Mammary epithelial cell (primary cell): ENCODE measurements at regions of chr22 and their contacts with region 1.

Region 1: GRCh38 chr22:46649141-46650077 is 29.2 kb downstream of the GRAMD4 start:
- DNase-seq: no peak
- H3K4me3 ChIP-seq: no peak overlapping the region
- H3K27ac ChIP-seq: no peak overlapping the region
- H3K4me1 ChIP-seq: no peaks in the 10 kb centered on the region
- H3K27me3 ChIP-seq: no peaks in the 10 kb centered on the region
- CTCF ChIP-seq: no peak

Region 2: GRCh38 chr22:46549971-46550641 is 99.3 kb before region 1 on chr22:
- CTCF ChIA-PET with region 1: no interaction called
- dilution Hi-C with region 1: loop called (anchors 5 kb)
- in situ Hi-C with region 1: no loop called
- intact Hi-C with region 1: no loop called
- DNase-seq: no peak
- H3K4me3 ChIP-seq: no peak overlapping the region
- H3K27ac ChIP-seq: no peak overlapping the region
- H3K4me1 ChIP-seq: peaks cover 30% of the 10 kb centered on the region
- H3K27me3 ChIP-seq: no peaks in the 10 kb centered on the region
- CTCF ChIP-seq: no peak

Region 3: DNA sequence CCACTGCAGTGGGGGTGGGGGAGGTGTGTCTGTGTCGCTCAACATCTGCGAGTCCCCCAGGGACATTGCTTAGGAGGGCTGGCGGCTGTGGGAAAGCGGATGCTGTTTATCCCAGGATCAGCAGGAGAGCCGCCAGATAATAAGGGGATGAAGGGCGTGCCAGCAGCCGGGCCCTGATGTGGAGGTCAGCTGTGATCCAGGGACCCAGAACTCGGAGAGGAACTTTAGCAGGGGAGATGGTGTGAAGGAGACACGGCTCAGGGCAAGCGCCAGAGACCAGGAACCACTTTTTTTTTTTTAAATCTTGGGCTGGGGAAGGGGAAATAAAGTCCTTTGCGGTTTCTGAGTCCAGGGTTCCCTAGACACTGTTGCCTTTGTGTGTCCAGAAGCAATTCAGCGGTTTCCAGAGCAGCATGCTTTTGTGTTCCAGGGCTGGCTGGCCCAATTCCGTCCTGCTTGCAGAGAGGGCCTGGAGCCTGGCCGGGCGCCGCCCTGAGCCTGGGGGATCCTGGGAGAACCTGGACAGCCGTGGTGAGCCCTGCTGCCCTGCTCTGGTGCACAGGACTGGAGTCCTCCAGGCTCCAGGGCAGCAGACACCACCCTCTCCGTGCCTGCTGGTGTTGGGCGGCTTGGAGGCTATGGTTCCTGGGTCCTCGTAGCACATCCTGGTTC is 29.4 kb before region 1 on chr22 and contains the start of gene GRAMD4:
- CTCF ChIA-PET with region 1: no interaction called
- dilution Hi-C with region 1: no loop called
- in situ Hi-C with region 1: no loop called
- intact Hi-C with region 1: no loop called
- DNase-seq: no peak
- H3K4me3 ChIP-seq: no peak within 1 kb of the TSS
- H3K27ac ChIP-seq: no peak within 1 kb of the TSS
- H3K4me1 ChIP-seq: peaks cover 15% of the 10 kb centered on the region
- H3K27me3 ChIP-seq: no peaks in the 10 kb centered on the region
- CTCF ChIP-seq: no peak
- total RNA-seq, gene GRAMD4: 19.2 to 58.8 TPM

Region 4: DNA sequence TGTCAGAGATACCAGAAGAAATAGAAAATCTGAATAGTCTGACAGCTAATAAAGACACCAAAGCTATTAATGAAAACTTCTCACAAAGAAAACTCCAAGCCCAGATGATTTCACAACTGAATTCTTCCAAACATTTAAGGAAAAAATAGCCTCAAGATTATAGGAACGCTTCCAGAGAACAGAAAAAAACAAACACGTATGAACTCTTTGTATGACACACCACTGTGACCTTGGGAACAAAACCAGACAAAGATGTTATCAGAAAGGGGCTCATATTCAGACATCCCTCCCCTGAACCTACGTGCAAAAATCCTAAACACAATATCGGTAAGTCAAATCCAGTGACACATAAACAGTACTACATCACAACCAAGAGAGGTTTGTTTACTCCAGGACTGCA is 65.1 kb after region 1 on chr22:
- CTCF ChIA-PET with region 1: no interaction called
- dilution Hi-C with region 1: loop called (anchors 10 kb)
- in situ Hi-C with region 1: no loop called
- intact Hi-C with region 1: no loop called
- DNase-seq: no peak
- H3K4me3 ChIP-seq: no peak overlapping the region
- H3K27ac ChIP-seq: no peak overlapping the region
- H3K4me1 ChIP-seq: no peaks in the 10 kb centered on the region
- H3K27me3 ChIP-seq: no peaks in the 10 kb centered on the region
- CTCF ChIP-seq: no peak

Region 5: DNA sequence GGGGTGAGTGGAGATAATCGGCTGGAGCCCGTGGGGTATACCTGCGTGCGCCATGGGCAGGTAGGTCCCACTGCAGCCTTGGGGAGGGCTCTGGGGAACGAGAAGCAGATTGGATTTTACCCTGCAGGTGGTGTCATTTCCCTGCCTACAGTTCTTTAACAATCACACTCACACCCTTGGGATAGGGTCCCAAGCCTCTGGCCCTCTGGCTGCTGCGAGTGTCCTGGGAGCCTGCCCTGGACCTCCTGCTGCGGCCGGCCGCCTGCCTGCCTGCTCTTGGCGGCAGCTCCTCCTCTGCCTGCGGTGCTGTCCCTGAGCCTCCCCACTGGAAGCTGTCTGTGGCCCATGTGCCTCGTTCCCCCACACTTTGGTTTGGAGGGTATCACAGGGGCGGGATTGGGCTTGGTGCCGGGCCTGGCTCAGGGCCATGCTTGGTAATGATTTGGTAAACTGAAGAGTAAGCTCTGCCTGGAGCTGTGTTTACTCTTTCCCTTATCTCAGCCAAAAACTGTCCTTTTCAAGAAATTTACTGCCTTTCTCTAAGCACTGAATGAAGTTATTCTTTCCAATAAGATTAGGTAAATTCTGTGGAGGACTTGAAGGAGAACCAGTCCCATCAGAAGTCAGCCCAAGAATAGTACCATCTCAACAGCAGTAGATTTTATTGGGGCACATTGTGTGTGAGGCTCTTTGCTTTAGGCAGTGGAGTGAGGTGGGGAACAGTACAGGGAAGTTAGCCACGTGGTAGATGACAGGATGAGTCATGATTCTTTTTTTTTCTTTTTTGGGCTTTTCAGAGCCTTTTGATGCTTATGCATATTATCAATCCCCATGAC is 166.7 kb after region 1 on chr22:
- CTCF ChIA-PET with region 1: no interaction called
- dilution Hi-C with region 1: no loop called
- in situ Hi-C with region 1: no loop called
- intact Hi-C with region 1: no loop called
- DNase-seq: no peak
- H3K4me3 ChIP-seq: no peak overlapping the region
- H3K27ac ChIP-seq: no peak overlapping the region
- H3K4me1 ChIP-seq: peaks cover 12% of the 10 kb centered on the region
- H3K27me3 ChIP-seq: no peaks in the 10 kb centered on the region
- CTCF ChIP-seq: no peak